ENCODE measurements at regions of chr10 and their contacts with region 1.

Region 1: GRCh38 chr10:60789340-60789739 is 11.1 kb downstream of the CDK1 start:
- DNase-seq: no peak
- H3K4me3 ChIP-seq: no peak overlapping the region
- H3K4me3 Mint-ChIP-seq: peak overlapping the region in 2 of 8 donors; percentile 0 to 42
- H3K27ac ChIP-seq: no peak overlapping the region
- H3K27ac Mint-ChIP-seq: peak overlapping the region in 1 of 7 donors; percentile 43
- H3K4me1 ChIP-seq: peaks cover 66% of the 10 kb centered on the region
- H3K4me1 Mint-ChIP-seq: peaks cover 33 to 64% (median 48%) of the 10 kb centered on the region in 4 donors
- H3K27me3 ChIP-seq: no peaks in the 10 kb centered on the region
- H3K27me3 Mint-ChIP-seq: no peaks in the 10 kb centered on the region

Region 2: GRCh38 chr10:60778214-60779029 is 10.9 kb before region 1 on chr10 and contains the start of gene CDK1:
- CTCF ChIA-PET with region 1: interaction called, 5 read pairs
- POLR2A ChIA-PET with region 1: interaction called, 4 read pairs
- intact Hi-C with region 1: loop called (anchors 1 kb)
- DNase-seq: peak; percentile 94 to 97 (median 95)
- H3K4me3 ChIP-seq: peak within 1 kb of the TSS; percentile 64 to 79
- H3K4me3 Mint-ChIP-seq: peak within 1 kb of the TSS; percentile 93 to 99 (median 96)
- H3K27ac ChIP-seq: peak within 1 kb of the TSS; percentile 32
- H3K27ac Mint-ChIP-seq: peak within 1 kb of the TSS; percentile 67 to 93 (median 88)
- H3K4me1 ChIP-seq: peaks cover 33% of the 10 kb centered on the region
- H3K4me1 Mint-ChIP-seq: peaks cover 15 to 33% (median 20%) of the 10 kb centered on the region in 4 donors
- H3K27me3 ChIP-seq: no peaks in the 10 kb centered on the region
- H3K27me3 Mint-ChIP-seq: peaks cover 2 to 4% of the 10 kb centered on the region in 2 donors
- total RNA-seq, gene CDK1: 1.3 to 1.6 TPM

Measured in CD4-positive, alpha-beta memory T cell (primary cell).